Panc1 (cell line): ENCODE measurements at regions of chr19 and their contacts with region 1.

Region 1: DNA sequence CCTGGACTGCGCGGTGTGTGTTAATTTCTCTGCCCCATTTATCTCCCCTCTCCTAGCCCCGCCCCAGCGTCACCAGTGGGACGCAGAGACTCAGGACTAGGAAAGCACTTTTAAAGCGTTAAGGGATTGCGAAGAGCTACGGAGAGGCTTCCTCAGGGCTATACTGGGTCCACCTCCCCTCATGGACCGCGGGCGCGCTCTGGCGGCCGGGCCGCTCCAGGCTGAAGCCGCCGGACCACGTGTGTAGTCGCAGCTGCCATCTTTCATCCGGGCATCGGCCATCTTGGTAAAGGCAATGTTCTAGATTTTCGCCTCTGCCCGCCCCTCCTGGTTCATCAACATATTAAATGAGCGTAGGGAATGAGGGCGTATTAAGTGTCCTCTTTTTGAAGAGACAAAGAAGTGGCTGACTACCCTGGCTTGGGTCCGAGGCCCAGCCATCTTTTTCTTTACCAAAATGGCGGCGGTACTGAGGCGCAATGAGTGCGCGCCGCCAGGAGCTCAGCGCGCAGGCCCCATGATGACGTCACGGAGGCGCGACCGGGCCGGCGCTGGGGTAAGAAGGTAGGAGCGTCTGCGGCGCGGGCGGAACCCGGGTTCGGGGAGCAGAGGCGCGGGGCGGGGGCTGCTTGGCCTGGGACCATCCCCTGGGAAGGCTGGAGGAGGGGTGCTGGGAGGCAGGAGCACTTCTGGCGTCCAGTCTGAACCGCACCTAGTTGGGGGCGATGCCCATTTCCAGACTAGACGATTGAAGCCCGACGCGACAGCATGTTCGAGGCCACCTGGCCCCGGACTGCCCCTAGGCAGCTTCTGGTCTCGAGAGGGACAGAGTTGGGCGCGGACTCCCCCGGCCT is at the start of gene CCDC124:
- DNase-seq: peak; percentile 67
- ATAC-seq: peak; percentile 97
- H3K4me3 ChIP-seq: peak within 1 kb of the TSS; percentile 73 to 89
- H3K27ac ChIP-seq: peak within 1 kb of the TSS; percentile 93
- H3K4me1 ChIP-seq: peaks cover 11% of the 10 kb centered on the region; the same call in 1 of the 2 replicates
- H3K27me3 ChIP-seq: no peaks in the 10 kb centered on the region
- CTCF ChIP-seq: peak; percentile 94
- total RNA-seq, gene CCDC124: 110 TPM

Region 2: GRCh38 chr19:17378271-17378670 is 554.4 kb before region 1 on chr19:
- CTCF ChIA-PET with region 1: interaction called, 13 read pairs
- POLR2A ChIA-PET with region 1: no interaction called
- in situ Hi-C with region 1: no loop called
- intact Hi-C with region 1: no loop called
- DNase-seq: no peak
- ATAC-seq: no peak
- H3K4me3 ChIP-seq: no peak overlapping the region
- H3K27ac ChIP-seq: no peak overlapping the region
- H3K4me1 ChIP-seq: peaks cover 4% of the 10 kb centered on the region; the same call in 1 of the 2 replicates
- H3K27me3 ChIP-seq: no peaks in the 10 kb centered on the region
- CTCF ChIP-seq: no peak

Region 3: GRCh38 chr19:17739121-17739875 is 193.4 kb before region 1 on chr19:
- CTCF ChIA-PET with region 1: no interaction called
- POLR2A ChIA-PET with region 1: no interaction called
- in situ Hi-C with region 1: no loop called
- intact Hi-C with region 1: no loop called
- DNase-seq: no peak
- ATAC-seq: peak; percentile 51; the same call in 1 of the 2 replicates
- H3K4me3 ChIP-seq: no peak overlapping the region
- H3K27ac ChIP-seq: no peak overlapping the region
- H3K4me1 ChIP-seq: no peaks in the 10 kb centered on the region
- H3K27me3 ChIP-seq: no peaks in the 10 kb centered on the region
- CTCF ChIP-seq: no peak

Region 4: GRCh38 chr19:17821190-17821589 is 111.5 kb before region 1 on chr19 and contains the start of gene INSL3:
- CTCF ChIA-PET with region 1: no interaction called
- POLR2A ChIA-PET with region 1: no interaction called
- in situ Hi-C with region 1: no loop called
- intact Hi-C with region 1: no loop called
- DNase-seq: no peak
- ATAC-seq: no peak
- H3K4me3 ChIP-seq: no peak within 1 kb of the TSS
- H3K27ac ChIP-seq: no peak within 1 kb of the TSS
- H3K4me1 ChIP-seq: no peaks in the 10 kb centered on the region
- H3K27me3 ChIP-seq: no peaks in the 10 kb centered on the region
- CTCF ChIP-seq: no peak
- total RNA-seq, gene INSL3: 0.57 TPM

Region 5: DNA sequence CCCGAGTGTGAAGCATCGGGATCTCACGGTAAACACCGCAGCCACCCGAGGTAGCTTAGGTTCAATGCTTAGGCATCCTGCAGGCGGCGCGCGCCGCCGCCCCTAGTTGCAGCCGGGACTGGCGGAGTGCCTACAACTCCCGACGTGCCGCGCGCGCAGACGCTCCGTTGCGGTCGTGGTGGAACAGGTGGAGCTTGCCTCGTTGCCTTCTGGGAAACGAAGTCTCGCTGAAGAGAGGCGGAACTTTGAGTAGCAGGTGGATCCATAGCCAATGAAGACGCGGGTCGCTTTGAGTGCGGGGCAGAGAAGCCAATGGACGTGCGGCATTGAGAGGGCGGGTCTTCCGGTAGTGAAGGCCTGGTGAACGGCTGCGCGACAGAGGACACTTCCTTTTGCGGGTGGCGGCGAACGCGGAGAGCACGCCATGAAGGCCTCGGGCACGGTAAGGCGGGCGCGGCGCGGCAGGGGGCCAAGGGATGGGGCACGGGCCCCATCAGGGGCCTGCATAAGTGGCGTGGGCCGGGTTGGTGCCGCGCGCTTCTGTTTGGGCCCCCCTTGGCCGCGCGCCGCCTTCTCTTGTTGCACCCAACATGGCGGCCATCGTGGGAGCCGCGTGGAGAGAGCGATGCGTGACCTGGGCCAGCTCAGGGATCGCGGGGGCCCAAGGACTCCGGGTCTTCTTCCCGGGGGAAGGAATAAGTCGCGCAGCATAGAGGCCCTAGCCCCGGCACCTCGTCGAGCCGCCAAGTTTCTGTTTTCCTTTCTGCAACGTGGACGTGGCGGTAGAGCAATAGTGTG is 73.0 kb before region 1 on chr19 and contains the start of gene RPL18A:
- CTCF ChIA-PET with region 1: interaction called, 13 read pairs
- POLR2A ChIA-PET with region 1: interaction called, 6 read pairs
- in situ Hi-C with region 1: no loop called
- intact Hi-C with region 1: no loop called
- DNase-seq: peak; percentile 97
- ATAC-seq: peak; percentile 93
- H3K4me3 ChIP-seq: peak within 1 kb of the TSS; percentile 96 to 99
- H3K27ac ChIP-seq: peak within 1 kb of the TSS; percentile 98
- H3K4me1 ChIP-seq: peaks cover 25% of the 10 kb centered on the region
- H3K27me3 ChIP-seq: no peaks in the 10 kb centered on the region
- CTCF ChIP-seq: peak; percentile 94
- total RNA-seq, gene RPL18A: 1,352 TPM

Region 6: DNA sequence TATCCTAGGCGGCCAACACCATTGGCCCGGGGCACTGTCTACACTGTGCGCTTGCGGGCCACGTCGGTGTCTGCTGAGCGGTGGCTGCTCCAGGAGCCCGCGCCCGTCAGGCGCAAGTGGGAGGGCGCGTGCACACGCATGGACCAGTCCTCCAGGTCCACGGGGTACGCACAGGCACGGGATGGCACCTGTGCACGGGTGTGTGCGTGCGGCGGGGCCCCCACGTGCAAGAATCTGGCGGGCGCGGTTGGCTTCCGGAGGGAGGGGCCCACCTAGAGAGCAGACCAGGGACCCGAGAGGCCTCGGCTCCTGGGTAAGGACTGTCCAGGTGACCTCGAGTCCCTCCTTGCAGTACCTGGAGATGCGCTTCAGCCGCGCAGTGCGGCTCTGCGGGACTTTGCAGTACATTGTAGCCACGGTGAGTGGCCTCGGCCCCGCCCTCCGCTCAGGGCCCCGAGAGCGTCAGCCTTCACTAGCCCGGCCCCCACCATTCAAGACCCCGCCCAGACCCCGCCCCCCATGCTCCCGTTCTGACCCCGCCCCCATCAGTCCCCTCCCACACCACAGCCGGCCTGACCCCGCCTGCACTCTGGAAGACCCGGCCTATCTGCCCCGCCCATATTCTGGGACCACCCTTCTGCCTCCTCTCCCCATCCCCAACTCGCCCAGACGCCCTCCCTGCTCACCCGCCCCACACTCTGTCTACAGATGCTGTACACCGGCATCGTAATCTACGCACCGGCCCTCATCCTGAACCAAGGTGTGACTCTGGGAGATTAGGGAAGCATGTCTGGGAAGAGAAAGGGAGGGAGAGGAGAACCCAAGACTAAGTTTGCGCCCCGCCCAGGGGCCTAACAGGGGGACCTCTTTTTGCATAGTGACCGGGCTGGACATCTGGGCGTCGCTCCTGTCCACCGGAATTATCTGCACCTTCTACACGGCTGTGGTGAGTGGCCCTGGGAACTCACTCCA is 58.6 kb before region 1 on chr19:
- CTCF ChIA-PET with region 1: interaction called, 23 read pairs
- POLR2A ChIA-PET with region 1: no interaction called
- in situ Hi-C with region 1: no loop called
- intact Hi-C with region 1: loop called (anchors 1 kb)
- DNase-seq: no peak
- ATAC-seq: peak; percentile 76
- H3K4me3 ChIP-seq: peak overlapping the region; percentile 39 to 55
- H3K27ac ChIP-seq: no peak overlapping the region
- H3K4me1 ChIP-seq: no peaks in the 10 kb centered on the region
- H3K27me3 ChIP-seq: no peaks in the 10 kb centered on the region
- CTCF ChIP-seq: no peak

Region 7: GRCh38 chr19:17947815-17948513 is 15.3 kb after region 1 on chr19:
- CTCF ChIA-PET with region 1: interaction called, 6 read pairs
- POLR2A ChIA-PET with region 1: interaction called, 11 read pairs
- in situ Hi-C with region 1: no loop called
- intact Hi-C with region 1: no loop called
- DNase-seq: no peak
- ATAC-seq: peak; percentile 74
- H3K4me3 ChIP-seq: peak overlapping the region; percentile 48 to 67
- H3K27ac ChIP-seq: no peak overlapping the region
- H3K4me1 ChIP-seq: peaks cover 19% of the 10 kb centered on the region
- H3K27me3 ChIP-seq: no peaks in the 10 kb centered on the region; the same call in 1 of the 2 replicates
- CTCF ChIP-seq: no peak